ENCODE measurements at regions of chr10 and their contacts with region 1.

Region 1: DNA sequence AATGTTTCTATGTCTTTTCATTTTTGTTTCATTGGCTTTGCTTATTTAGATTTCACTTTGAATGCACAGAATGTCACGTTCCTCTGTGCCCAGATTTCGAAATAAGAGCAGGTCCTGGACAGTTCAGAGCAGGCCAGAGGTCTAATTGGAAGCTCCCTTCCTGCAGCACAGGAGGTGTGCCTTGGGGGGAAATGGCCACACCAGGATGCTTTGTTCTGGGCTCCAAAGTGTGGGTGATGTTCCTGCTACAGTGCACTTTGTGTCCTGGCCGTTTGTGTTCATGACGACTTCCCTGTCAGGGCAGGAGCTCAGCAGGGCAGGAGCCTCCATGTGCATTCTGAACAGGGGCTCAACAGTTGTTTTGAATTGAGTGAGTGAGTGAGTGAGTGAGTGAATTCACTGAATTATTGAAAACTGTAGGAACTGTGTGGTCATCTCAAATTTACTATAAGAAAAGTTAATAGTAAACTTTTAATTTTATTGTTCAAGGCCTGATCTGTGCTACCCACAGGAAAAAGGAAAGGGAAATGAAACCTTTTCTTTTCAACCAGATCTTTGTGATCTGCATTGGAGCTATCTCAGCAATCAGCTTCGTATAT is 109.5 kb upstream of the GJD4 start:
- DNase-seq: no peak
- H3K4me3 Mint-ChIP-seq: no peak overlapping the region
- H3K27ac Mint-ChIP-seq: no peak overlapping the region
- H3K4me1 Mint-ChIP-seq: peaks cover 27% of the 10 kb centered on the region
- H3K27me3 Mint-ChIP-seq: no peaks in the 10 kb centered on the region

Region 2: DNA sequence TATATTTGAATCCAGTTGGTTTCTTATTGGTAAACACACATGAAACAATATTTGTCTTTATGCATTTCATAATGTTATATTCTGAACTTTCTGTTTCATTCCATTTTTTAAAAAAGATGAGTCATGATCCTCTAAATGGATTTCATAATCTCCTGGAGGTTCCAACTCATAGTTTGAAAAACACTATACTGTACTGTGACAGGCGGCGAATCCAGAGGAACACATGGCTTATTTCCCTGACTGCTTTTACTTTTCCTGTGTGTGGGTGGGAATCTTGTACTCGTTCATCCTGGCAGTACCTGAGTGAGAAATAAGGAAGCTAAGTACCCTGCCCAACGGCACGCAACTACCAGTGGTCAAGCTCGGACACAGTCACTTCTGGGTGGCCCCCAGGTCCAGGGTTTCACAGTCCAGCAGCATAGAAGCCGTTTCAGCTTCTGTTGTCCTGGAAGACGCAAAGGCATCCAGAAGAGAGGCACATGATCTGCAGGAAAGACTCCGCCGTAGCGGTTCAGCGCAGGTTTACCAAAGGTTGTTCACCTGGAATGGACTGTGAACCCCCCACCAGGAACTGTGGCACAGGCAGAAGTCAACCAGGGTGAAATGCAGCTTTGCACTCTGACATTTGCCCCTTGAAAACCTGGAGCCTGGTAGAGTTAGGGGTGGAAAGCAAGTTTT is 41.6 kb before region 1 on chr10:
- CTCF ChIA-PET with region 1: no interaction called
- POLR2A ChIA-PET with region 1: interaction called, 10 read pairs
- DNase-seq: no peak
- H3K4me3 Mint-ChIP-seq: no peak overlapping the region
- H3K27ac Mint-ChIP-seq: no peak overlapping the region
- H3K4me1 Mint-ChIP-seq: peaks cover 58% of the 10 kb centered on the region
- H3K27me3 Mint-ChIP-seq: no peaks in the 10 kb centered on the region